PC-9 (cell line): ENCODE measurements at regions of chr5 and their contacts with region 1.

Region 1: GRCh38 chr5:134769206-134769605 is 10.6 kb downstream of the DDX46 start:
- DNase-seq: no peak
- H3K4me3 ChIP-seq: no peak overlapping the region
- H3K27ac ChIP-seq: no peak overlapping the region
- H3K4me1 ChIP-seq: no peaks in the 10 kb centered on the region
- H3K27me3 ChIP-seq: no peaks in the 10 kb centered on the region
- CTCF ChIP-seq: no peak

Region 2: DNA sequence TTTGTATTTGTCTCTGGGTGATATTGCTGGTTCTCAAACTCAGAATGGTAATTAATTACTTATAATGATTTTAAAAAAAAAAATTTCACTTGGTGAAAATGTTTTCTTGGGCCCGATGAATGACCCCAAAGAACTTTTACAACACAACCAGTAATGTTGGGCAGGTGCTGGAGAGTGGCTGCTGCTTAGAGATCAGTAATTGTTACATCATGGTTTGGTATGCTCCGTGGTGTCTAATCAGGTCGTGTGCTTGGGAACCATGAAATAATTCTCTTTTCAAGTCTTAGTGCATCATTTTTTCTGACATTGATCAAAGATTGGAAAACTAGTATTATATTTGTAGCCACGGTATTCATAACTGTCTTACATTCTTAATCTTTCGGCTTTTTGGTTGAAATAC is 165.0 kb after region 1 on chr5:
- CTCF ChIA-PET with region 1: no interaction called
- POLR2A ChIA-PET with region 1: interaction called, 10 read pairs
- intact Hi-C with region 1: no loop called
- DNase-seq: no peak
- H3K4me3 ChIP-seq: no peak overlapping the region
- H3K27ac ChIP-seq: no peak overlapping the region
- H3K4me1 ChIP-seq: no peaks in the 10 kb centered on the region
- H3K27me3 ChIP-seq: no peaks in the 10 kb centered on the region
- CTCF ChIP-seq: no peak

Region 3: GRCh38 chr5:134948911-134949310 is 179.7 kb after region 1 on chr5:
- CTCF ChIA-PET with region 1: no interaction called
- POLR2A ChIA-PET with region 1: no interaction called
- intact Hi-C with region 1: no loop called
- DNase-seq: no peak
- H3K4me3 ChIP-seq: no peak overlapping the region
- H3K27ac ChIP-seq: no peak overlapping the region
- H3K4me1 ChIP-seq: no peaks in the 10 kb centered on the region
- H3K27me3 ChIP-seq: no peaks in the 10 kb centered on the region
- CTCF ChIP-seq: no peak